ENCODE measurements at regions of chr19 and their contacts with region 1.

Region 1: GRCh38 chr19:14136509-14137281 is at the start of gene ASF1B:
- DNase-seq: peak; percentile 98 to 99 (median 99)
- ATAC-seq: peak; percentile 88 to 94 (median 90)
- H3K4me3 ChIP-seq: peak within 1 kb of the TSS; percentile 70 to 81 (median 76)
- H3K27ac ChIP-seq: peak within 1 kb of the TSS; percentile 91 to 99 (median 98)
- H3K4me1 ChIP-seq: peaks cover 0 to 7% (median 0%) of the 10 kb centered on the region in 4 donors
- H3K27me3 ChIP-seq: no peaks in the 10 kb centered on the region
- CTCF ChIP-seq: peak; percentile 85 to 97 (median 92)
- POLR2A ChIP-seq: peak; percentile 74
- total RNA-seq, gene ASF1B: 0.24 to 5.3 (median 0.61) TPM

Region 2: DNA sequence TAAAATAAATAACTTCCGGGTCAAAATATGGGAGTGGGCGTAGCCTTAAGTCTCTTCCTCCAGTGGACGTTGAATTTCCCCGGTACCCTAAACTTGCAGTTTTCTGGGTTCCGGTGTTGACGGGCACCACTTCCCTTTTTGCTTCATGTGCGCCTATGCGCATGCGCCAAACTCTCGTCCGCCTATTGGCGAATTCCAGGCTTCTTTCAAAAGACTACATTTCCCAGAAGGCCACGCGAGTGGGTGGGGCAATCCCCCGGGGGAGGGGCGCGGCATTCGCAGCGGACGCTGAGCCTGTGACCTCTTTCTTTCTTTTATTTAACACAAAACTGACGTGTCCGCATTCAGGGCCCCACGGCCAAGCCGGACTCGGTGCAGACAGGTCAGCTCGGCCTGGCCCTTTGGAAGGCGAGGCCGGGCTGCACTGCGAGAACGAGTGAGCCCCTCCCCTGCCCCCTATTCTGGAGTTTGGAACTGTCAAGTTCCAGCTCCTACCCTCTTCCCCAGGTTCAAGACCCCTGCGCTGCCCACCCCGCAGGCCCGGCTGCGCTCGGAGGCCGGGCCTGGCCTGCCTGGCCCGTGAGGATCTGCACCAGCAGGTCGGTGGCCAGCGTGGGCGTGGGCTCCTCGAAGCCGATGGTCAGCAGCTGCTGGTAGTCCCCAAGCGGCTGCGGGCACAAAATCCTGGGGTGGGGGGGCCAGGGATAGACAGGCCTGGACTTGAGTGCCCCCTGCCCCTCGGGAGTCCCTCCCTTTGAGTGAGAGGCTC is 55.2 kb before region 1 on chr19:
- intact Hi-C with region 1: loop called in 1 of 2 experiments (anchors 10 kb)
- DNase-seq: peak; percentile 98 to 99 (median 99)
- ATAC-seq: peak; percentile 91 to 96 (median 94)
- H3K4me3 ChIP-seq: peak overlapping the region; percentile 61 to 78 (median 73)
- H3K27ac ChIP-seq: peak overlapping the region; percentile 87 to 91 (median 88)
- H3K4me1 ChIP-seq: peaks cover 0 to 25% (median 0%) of the 10 kb centered on the region in 4 donors
- H3K27me3 ChIP-seq: no peaks in the 10 kb centered on the region
- CTCF ChIP-seq: peak in 1 of 4 donors; percentile 4
- POLR2A ChIP-seq: peak; percentile 87